A549 (cell line): ENCODE measurements at regions of chr3 and their contacts with region 1.

Region 1: GRCh38 chr3:112734718-112735350 is 93.9 kb upstream of the CCDC80 start:
- DNase-seq: peak; percentile 52 to 90
- ATAC-seq: peak; percentile 95 to 96
- H3K4me3 ChIP-seq: no peak overlapping the region
- H3K27ac ChIP-seq: peak overlapping the region; percentile 70 to 82
- H3K4me1 ChIP-seq: peaks cover 35% of the 10 kb centered on the region
- CTCF ChIP-seq: peak; percentile 87
- EP300 ChIP-seq: no peak
- POLR2A ChIP-seq: no peak
- RAD21 ChIP-seq: peak; percentile 95 to 97

Region 2: GRCh38 chr3:111936191-111936841 is 798.5 kb before region 1 on chr3:
- CTCF ChIA-PET with region 1: no interaction called
- POLR2A ChIA-PET with region 1: no interaction called
- DNase-seq: peak; percentile 40 to 48
- ATAC-seq: peak; percentile 91 to 93
- H3K4me3 ChIP-seq: no peak overlapping the region
- H3K27ac ChIP-seq: peak overlapping the region; percentile 58 to 88
- H3K4me1 ChIP-seq: peaks cover 49% of the 10 kb centered on the region
- CTCF ChIP-seq: no peak
- EP300 ChIP-seq: peak; percentile 39 to 44; a peak in 2 of 5 replicates
- POLR2A ChIP-seq: no peak
- RAD21 ChIP-seq: no peak; a peak in 1 of 5 replicates

Region 3: GRCh38 chr3:112498914-112499711 is 235.7 kb before region 1 on chr3 and contains the start of gene BTLA:
- CTCF ChIA-PET with region 1: no interaction called
- POLR2A ChIA-PET with region 1: no interaction called
- DNase-seq: no peak
- ATAC-seq: no peak
- H3K4me3 ChIP-seq: no peak within 1 kb of the TSS
- H3K27ac ChIP-seq: no peak within 1 kb of the TSS
- H3K4me1 ChIP-seq: no peaks in the 10 kb centered on the region
- CTCF ChIP-seq: no peak
- EP300 ChIP-seq: no peak
- POLR2A ChIP-seq: no peak
- RAD21 ChIP-seq: no peak
- polyA plus RNA-seq, gene BTLA: 0.03 TPM in 1 of 2 replicates, not detected in the other

Region 4: DNA sequence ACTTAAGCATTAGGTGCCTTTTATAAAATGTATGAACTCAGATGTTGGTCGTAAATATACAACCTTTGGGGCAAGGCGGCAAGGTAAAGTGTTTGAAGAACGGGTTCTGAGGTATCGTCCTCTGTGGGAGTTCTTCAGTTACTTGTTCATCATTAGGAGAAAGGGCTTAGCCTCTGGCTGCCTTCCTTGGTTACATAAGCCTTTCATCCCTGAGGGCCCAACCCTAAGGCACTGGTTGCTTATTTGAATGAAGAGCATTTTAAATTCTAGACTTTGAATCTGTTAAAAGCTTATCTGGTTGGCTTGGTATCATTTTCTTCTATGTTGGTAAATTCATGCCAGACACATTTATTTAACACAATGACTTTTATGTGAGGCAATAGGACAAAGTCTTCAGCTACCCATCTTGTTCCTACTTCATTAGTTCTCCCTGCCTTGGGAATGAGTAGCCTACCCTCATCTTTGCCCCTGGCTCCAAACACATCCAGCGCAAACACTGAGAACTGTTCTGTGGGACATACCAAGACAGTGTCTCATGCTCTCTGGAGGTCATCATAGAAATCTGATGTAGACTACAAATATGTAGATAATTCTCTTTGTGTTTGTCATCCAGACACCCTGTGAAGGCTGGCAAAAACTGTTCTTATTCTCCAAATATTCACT is 81.5 kb before region 1 on chr3:
- CTCF ChIA-PET with region 1: interaction called, 101 read pairs
- POLR2A ChIA-PET with region 1: interaction called, 7 read pairs
- DNase-seq: peak; percentile 92 to 97
- ATAC-seq: peak; percentile 96 to 97
- H3K4me3 ChIP-seq: no peak overlapping the region
- H3K27ac ChIP-seq: peak overlapping the region; percentile 92 to 99
- H3K4me1 ChIP-seq: peaks cover 78% of the 10 kb centered on the region
- CTCF ChIP-seq: no peak
- EP300 ChIP-seq: peak; percentile 89 to 93
- POLR2A ChIP-seq: no peak
- RAD21 ChIP-seq: peak; percentile 30 to 52; a peak in 4 of 5 replicates

Region 5: GRCh38 chr3:112709911-112710310 is 24.9 kb before region 1 on chr3:
- CTCF ChIA-PET with region 1: interaction called, 13 read pairs
- POLR2A ChIA-PET with region 1: no interaction called
- DNase-seq: no peak
- ATAC-seq: no peak
- H3K4me3 ChIP-seq: no peak overlapping the region
- H3K27ac ChIP-seq: peak overlapping the region; percentile 19 to 33; a peak in 2 of 6 replicates
- H3K4me1 ChIP-seq: peaks cover 10% of the 10 kb centered on the region
- CTCF ChIP-seq: no peak
- EP300 ChIP-seq: no peak
- POLR2A ChIP-seq: no peak
- RAD21 ChIP-seq: no peak

Region 6: DNA sequence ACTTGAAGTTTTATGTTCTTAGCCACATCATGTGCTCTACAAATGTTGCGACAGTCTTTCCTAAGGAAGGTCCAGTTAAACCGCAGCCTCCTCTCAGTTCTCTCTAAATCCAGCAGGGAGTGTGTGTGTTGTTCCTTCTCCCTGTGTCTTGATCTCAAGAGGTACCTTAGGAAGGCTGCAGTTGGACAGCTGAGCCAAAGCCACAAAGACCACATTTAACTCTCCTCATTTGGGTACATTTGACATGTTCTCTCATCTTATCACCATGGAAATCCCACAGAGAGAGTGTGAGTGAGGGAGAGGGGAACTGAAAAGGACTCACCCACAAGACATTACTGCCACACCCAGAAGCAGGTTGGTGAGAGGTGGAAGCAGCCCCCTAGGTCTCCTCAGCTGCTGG is 32.3 kb after region 1 on chr3:
- CTCF ChIA-PET with region 1: interaction called, 16 read pairs
- POLR2A ChIA-PET with region 1: no interaction called
- DNase-seq: no peak
- ATAC-seq: peak; percentile 39 to 40; a peak in 2 of 6 replicates
- H3K4me3 ChIP-seq: no peak overlapping the region
- H3K27ac ChIP-seq: peak overlapping the region; percentile 19 to 58; a peak in 4 of 6 replicates
- H3K4me1 ChIP-seq: peaks cover 26% of the 10 kb centered on the region
- CTCF ChIP-seq: no peak
- EP300 ChIP-seq: no peak
- POLR2A ChIP-seq: no peak
- RAD21 ChIP-seq: no peak

Region 7: GRCh38 chr3:112799946-112800345 is 65.1 kb after region 1 on chr3:
- CTCF ChIA-PET with region 1: interaction called, 11 read pairs
- POLR2A ChIA-PET with region 1: no interaction called
- DNase-seq: no peak
- ATAC-seq: no peak
- H3K4me3 ChIP-seq: no peak overlapping the region
- H3K27ac ChIP-seq: peak overlapping the region; percentile 28 to 63; a peak in 4 of 6 replicates
- H3K4me1 ChIP-seq: peaks cover 24% of the 10 kb centered on the region
- CTCF ChIP-seq: no peak
- EP300 ChIP-seq: no peak
- POLR2A ChIP-seq: no peak
- RAD21 ChIP-seq: no peak

Region 8: GRCh38 chr3:112974178-112974517 is 239.3 kb after region 1 on chr3:
- CTCF ChIA-PET with region 1: interaction called, 20 read pairs
- POLR2A ChIA-PET with region 1: interaction called, 5 read pairs
- DNase-seq: no peak
- ATAC-seq: no peak
- H3K4me3 ChIP-seq: no peak overlapping the region
- H3K27ac ChIP-seq: no peak overlapping the region
- H3K4me1 ChIP-seq: peaks cover 4% of the 10 kb centered on the region; the same call in 1 of the 3 replicates
- CTCF ChIP-seq: no peak
- EP300 ChIP-seq: no peak
- POLR2A ChIP-seq: no peak
- RAD21 ChIP-seq: no peak